PC-3 (cell line): ENCODE measurements at regions of chrX and their contacts with region 1.

Region 1: GRCh38 chrX:83416273-83416672 is 91.8 kb upstream of the POU3F4 start:
- DNase-seq: peak; percentile 35
- ATAC-seq: peak; percentile 46; the same call in 1 of the 2 replicates
- H3K4me3 ChIP-seq: no peak overlapping the region
- H3K27ac ChIP-seq: no peak overlapping the region
- H3K4me1 ChIP-seq: no peaks in the 10 kb centered on the region
- H3K27me3 ChIP-seq: no peaks in the 10 kb centered on the region
- CTCF ChIP-seq: peak; percentile 54; the same call in 1 of the 2 replicates

Region 2: DNA sequence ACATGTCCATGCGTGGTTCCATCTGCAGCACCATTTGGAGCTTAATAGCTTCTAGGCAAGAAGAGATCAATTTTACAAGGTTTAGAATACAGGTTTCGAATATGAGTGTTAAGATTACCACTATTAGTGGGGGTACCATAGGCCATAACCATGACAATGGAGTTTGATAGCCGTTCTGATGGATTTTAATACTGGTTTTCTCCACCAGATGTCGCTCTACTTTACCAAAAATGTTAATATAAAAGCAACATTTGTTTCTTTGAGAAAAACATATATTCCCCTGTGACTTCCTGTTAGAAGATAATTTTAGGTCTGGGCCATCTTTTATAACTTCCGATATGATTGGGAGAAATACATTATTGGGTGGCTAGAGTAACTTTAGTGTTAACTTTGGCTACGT is 407.9 kb before region 1 on chrX:
- CTCF ChIA-PET with region 1: interaction called, 7 read pairs
- POLR2A ChIA-PET with region 1: no interaction called
- intact Hi-C with region 1: loop called (anchors 2 kb)
- DNase-seq: peak; percentile 51
- ATAC-seq: no peak
- H3K4me3 ChIP-seq: no peak overlapping the region
- H3K27ac ChIP-seq: no peak overlapping the region
- H3K4me1 ChIP-seq: no peaks in the 10 kb centered on the region
- H3K27me3 ChIP-seq: no peaks in the 10 kb centered on the region
- CTCF ChIP-seq: peak; percentile 69

Region 3: GRCh38 chrX:83508006-83508405 is 91.7 kb after region 1 on chrX and contains the start of gene POU3F4:
- CTCF ChIA-PET with region 1: no interaction called
- POLR2A ChIA-PET with region 1: no interaction called
- intact Hi-C with region 1: no loop called
- DNase-seq: no peak
- ATAC-seq: no peak
- H3K4me3 ChIP-seq: no peak within 1 kb of the TSS
- H3K27ac ChIP-seq: no peak within 1 kb of the TSS
- H3K4me1 ChIP-seq: no peaks in the 10 kb centered on the region
- H3K27me3 ChIP-seq: peaks cover 38% of the 10 kb centered on the region
- CTCF ChIP-seq: no peak
- total RNA-seq, gene POU3F4: not detected in 2 replicates

Region 4: GRCh38 chrX:83529950-83530349 is 113.7 kb after region 1 on chrX:
- CTCF ChIA-PET with region 1: no interaction called
- POLR2A ChIA-PET with region 1: no interaction called
- intact Hi-C with region 1: no loop called
- DNase-seq: no peak
- ATAC-seq: no peak
- H3K4me3 ChIP-seq: no peak overlapping the region
- H3K27ac ChIP-seq: no peak overlapping the region
- H3K4me1 ChIP-seq: no peaks in the 10 kb centered on the region
- H3K27me3 ChIP-seq: peaks cover 3% of the 10 kb centered on the region; the same call in 1 of the 2 replicates
- CTCF ChIP-seq: no peak